ENCODE measurements at regions of chr12 and their contacts with region 1.

Region 1: GRCh38 chr12:118773956-118774723 is 207.2 kb upstream of the SRRM4 start:
- DNase-seq: no peak
- H3K4me3 ChIP-seq: no peak overlapping the region
- H3K27ac ChIP-seq: no peak overlapping the region
- H3K4me1 ChIP-seq: no peaks in the 10 kb centered on the region
- H3K27me3 ChIP-seq: no peaks in the 10 kb centered on the region
- CTCF ChIP-seq: no peak

Region 2: GRCh38 chr12:118715647-118716046 is 58.5 kb before region 1 on chr12:
- CTCF ChIA-PET with region 1: no interaction called
- dilution Hi-C with region 1: loop called (anchors 5 kb)
- in situ Hi-C with region 1: no loop called
- intact Hi-C with region 1: no loop called
- DNase-seq: no peak
- H3K4me3 ChIP-seq: no peak overlapping the region
- H3K27ac ChIP-seq: no peak overlapping the region
- H3K4me1 ChIP-seq: no peaks in the 10 kb centered on the region
- H3K27me3 ChIP-seq: no peaks in the 10 kb centered on the region
- CTCF ChIP-seq: no peak

Region 3: DNA sequence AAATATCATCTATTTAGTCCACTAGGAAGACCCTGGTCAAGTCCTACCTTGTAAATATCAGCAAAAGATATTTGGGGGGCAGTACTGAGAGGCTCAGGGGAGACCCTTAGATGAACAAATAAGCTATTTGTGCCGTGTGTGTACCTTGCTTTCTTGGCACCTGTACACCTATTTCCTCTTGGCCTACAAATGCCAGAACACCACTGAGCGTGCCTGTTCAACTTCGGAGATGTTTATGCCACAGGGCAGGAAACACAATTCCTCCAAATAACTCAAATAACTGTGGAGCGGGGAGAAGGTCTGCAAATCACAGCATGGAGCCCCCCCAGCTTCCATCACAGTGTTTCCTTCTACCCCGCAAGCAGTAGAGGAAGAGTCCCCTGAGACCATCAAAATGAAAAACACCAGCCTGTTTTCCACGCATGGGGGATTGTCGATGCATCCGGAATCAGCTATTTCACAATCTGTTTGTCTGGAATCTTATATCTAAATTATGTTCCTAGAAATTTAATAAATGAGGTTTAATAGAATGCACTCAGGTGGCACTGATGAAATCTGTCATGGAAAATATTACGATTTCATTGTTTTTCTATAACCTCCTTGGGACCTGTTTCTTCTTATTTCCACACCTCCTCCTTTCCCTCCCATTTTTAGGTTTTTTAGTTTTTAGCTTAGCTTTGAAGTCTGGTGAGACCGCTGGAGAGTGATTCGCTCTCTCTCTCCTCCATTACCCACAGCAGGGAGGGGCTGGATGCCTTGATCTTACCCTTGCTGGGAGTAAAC is 46.8 kb before region 1 on chr12:
- CTCF ChIA-PET with region 1: no interaction called
- dilution Hi-C with region 1: no loop called
- in situ Hi-C with region 1: no loop called
- intact Hi-C with region 1: no loop called
- DNase-seq: no peak
- H3K4me3 ChIP-seq: no peak overlapping the region
- H3K27ac ChIP-seq: no peak overlapping the region
- H3K4me1 ChIP-seq: no peaks in the 10 kb centered on the region
- H3K27me3 ChIP-seq: no peaks in the 10 kb centered on the region
- CTCF ChIP-seq: no peak

Measured in mammary epithelial cell (primary cell).